ENCODE measurements at regions of chr2 and their contacts with region 1.

Region 1: DNA sequence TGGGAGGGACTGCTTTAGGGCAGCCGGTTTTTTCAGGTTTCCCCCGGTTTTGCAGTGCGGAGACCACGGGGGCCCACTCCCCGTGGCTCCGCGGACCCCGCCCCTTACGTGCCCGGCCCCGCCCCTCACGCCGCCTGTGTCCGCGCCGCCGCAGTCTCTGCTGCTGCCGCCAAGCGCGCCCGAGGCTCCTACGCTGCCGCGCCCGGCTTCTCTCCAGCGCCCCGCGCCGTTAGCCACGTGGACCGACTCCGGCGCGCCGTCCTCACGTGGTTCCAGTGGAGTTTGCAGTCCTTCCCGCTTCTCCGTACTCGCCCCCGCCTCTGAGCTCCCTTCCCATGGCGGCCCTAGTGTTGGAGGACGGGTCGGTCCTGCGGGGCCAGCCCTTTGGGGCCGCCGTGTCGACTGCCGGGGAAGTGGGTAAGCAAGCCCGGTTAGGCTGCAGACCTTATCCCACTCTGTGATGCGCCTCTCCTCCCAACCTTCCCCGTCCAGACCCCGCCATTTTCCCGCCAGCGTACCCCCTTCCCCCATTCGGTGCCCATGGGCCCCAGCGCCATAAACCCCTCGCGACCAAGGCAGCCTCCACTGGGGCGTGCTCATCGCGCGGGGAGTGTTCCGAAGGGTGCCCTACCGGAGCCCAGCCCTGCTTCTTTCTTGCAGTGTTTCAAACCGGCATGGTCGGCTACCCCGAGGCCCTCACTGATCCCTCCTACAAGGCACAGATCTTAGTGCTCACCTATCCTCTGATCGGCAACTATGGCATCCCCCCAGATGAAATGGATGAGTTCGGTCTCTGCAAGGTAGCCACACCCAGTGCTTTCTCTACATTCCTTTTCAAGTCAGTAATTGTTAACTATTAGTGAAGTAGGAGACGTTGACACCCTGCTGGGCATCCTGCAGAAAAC is at the start of gene CAD:
- DNase-seq: peak; percentile 96
- H3K4me3 Mint-ChIP-seq: peak within 1 kb of the TSS; percentile 98
- H3K27ac Mint-ChIP-seq: peak within 1 kb of the TSS; percentile 98
- H3K4me1 Mint-ChIP-seq: peaks cover 38% of the 10 kb centered on the region
- H3K27me3 Mint-ChIP-seq: no peaks in the 10 kb centered on the region
- total RNA-seq, gene CAD: 144 and 159 TPM in 2 replicates

Region 2: GRCh38 chr2:26438526-26438925 is 778.9 kb before region 1 on chr2:
- intact Hi-C with region 1: no loop called
- DNase-seq: no peak
- H3K4me3 Mint-ChIP-seq: no peak overlapping the region
- H3K27ac Mint-ChIP-seq: no peak overlapping the region
- H3K4me1 Mint-ChIP-seq: no peaks in the 10 kb centered on the region
- H3K27me3 Mint-ChIP-seq: peaks cover 19% of the 10 kb centered on the region

Region 3: DNA sequence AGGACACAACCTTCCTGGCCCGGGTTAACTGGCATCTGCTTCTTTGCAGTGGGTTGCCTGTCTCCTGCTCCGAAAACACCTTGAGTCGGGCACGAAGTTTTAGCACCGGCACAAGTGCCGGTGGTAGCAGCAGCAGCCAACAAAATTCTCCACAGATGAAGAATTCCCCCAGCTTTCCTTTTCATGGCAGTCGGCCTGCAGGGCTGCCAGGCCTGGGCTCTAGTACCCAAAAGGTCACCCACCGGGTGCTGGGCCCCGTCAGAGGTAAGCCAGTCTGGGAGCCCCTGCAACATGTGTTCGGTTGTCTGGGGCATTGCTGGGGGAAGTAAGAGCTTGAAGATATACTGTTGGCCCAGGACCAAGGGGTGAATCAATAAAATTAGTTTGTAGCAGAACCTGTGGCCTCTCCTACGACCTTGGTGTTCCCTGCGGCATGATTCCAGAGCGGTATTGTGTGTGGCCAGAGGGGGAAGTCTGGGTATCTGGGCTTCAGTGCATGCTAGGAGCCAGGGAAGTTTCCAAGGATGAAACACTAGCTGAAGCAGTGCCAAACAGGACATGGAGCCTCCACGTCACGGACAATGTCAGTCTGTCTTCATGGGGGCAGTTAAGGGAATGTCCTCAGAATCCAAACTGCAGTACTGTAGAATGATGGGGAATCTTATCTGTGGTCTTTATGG is 158.2 kb before region 1 on chr2:
- intact Hi-C with region 1: no loop called
- DNase-seq: no peak
- H3K4me3 Mint-ChIP-seq: no peak overlapping the region
- H3K27ac Mint-ChIP-seq: no peak overlapping the region
- H3K4me1 Mint-ChIP-seq: peaks cover 6% of the 10 kb centered on the region
- H3K27me3 Mint-ChIP-seq: no peaks in the 10 kb centered on the region

Region 4: DNA sequence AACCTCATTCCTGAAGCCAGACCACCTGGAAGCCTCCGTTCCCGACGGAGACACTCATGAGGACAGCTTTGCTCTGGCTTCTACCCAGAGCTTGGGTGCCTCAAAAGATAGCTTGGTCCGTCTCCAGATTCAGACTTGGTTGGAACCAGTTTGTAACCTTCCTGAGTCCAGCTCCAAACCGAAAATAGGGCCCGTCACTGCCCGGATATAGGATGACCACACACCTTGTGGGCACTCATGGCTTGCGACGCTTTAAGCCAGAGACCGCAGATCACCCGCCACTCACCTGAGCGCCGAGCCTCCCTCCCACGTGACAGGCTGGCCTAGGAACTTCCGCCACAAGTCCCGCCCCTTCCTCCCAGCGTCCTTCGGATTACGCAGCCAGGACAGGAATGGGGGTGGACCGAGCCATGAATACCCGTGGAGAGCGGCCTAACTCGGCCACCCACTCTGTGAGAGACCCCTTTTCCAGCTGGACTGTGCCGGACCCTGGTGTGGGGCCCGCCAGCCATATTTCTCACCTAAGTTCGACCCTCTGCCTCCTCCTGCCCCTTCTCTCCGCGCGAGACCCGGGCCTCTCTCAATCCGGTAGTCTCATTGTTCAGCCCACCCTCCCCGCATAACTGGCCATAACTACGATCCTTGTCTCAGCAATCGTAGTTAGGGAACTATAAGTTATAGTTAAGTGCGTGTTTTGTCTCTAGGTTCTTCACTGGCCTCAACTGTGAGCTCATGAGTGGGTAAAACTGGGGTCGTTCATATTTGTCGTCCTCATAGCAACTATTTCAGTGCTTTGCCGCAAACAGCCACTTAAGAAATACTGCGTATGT is 105.5 kb after region 1 on chr2 and contains the start of gene MPV17:
- intact Hi-C with region 1: loop called (anchors 5 kb)
- DNase-seq: peak; percentile 96
- H3K4me3 Mint-ChIP-seq: peak within 1 kb of the TSS; percentile 99
- H3K27ac Mint-ChIP-seq: peak within 1 kb of the TSS; percentile 98
- H3K4me1 Mint-ChIP-seq: peaks cover 15% of the 10 kb centered on the region
- H3K27me3 Mint-ChIP-seq: no peaks in the 10 kb centered on the region
- total RNA-seq, gene MPV17: 86.8 and 89.1 TPM in 2 replicates

Measured in activated CD4-positive, alpha-beta T cell treated with anti-CD3 and anti-CD28 coated beads, Interleukin-2, amount 10 ng/mL, durations not matched to agents 24 days and 14 days (primary cell).